ENCODE measurements at regions of chr2 and their contacts with region 1.

Region 1: GRCh38 chr2:69717861-69718273 is 24.1 kb upstream of the ANXA4 start:
- DNase-seq: peak in 1 of 2 experiments; percentile 37
- ATAC-seq: peak in 1 of 2 experiments; percentile 27; a peak in 3 of 6 replicates
- H3K4me3 ChIP-seq: no peak overlapping the region
- H3K27ac ChIP-seq: peak overlapping the region in 1 of 2 experiments; percentile 77; a peak in 3 of 6 replicates
- H3K4me1 ChIP-seq: peaks cover 35% of the 10 kb centered on the region
- CTCF ChIP-seq: no peak
- EP300 ChIP-seq: 0 out of 5 replicates have a peak, but pooled peaks of 1 of the 2 experiments have one; percentile 31
- POLR2A ChIP-seq: no peak
- RAD21 ChIP-seq: no peak

Region 2: DNA sequence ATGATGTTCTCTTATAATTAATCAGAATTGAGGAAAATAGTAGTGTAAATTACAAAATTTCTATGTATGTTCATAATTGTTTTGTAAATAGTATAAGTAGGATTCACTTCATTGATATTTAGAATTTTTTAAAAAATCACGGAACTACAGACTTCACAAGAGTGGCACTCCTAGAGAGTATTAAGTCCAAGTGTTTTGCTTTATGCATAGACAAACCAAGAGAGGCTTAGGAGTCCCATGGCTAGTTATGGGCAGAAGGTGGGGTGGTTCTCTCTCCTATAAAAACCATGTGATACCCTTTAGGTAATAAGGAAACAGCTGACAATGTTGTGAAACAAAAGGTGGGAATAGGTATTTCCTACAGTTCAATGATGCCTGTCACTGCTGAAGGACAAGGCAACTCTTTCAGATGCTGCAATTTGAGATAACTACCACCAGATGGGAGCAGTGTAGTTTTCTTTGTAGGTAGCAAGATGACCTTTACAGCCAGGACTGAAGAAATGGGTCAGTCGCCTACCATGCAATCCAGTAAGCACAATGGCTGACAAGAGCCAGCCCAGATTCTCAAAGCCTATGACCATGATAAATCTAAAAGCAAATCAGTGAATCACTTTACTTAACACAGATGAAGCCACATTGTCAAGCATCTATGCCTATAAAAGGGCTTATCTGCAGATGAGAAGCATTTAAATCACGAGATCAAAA is 158.3 kb before region 1 on chr2:
- CTCF ChIA-PET with region 1: interaction called, 66 read pairs
- POLR2A ChIA-PET with region 1: interaction called, 3 read pairs
- DNase-seq: peak; percentile 72 to 84
- ATAC-seq: peak; percentile 93 to 96
- H3K4me3 ChIP-seq: no peak overlapping the region
- H3K27ac ChIP-seq: 0 out of 6 replicates have a peak overlapping the region, but pooled peaks of 1 of the 2 experiments have one; percentile 4
- H3K4me1 ChIP-seq: peaks cover 12% of the 10 kb centered on the region
- CTCF ChIP-seq: peak; percentile 92
- EP300 ChIP-seq: no peak
- POLR2A ChIP-seq: no peak
- RAD21 ChIP-seq: peak; percentile 96 to 97

Region 3: DNA sequence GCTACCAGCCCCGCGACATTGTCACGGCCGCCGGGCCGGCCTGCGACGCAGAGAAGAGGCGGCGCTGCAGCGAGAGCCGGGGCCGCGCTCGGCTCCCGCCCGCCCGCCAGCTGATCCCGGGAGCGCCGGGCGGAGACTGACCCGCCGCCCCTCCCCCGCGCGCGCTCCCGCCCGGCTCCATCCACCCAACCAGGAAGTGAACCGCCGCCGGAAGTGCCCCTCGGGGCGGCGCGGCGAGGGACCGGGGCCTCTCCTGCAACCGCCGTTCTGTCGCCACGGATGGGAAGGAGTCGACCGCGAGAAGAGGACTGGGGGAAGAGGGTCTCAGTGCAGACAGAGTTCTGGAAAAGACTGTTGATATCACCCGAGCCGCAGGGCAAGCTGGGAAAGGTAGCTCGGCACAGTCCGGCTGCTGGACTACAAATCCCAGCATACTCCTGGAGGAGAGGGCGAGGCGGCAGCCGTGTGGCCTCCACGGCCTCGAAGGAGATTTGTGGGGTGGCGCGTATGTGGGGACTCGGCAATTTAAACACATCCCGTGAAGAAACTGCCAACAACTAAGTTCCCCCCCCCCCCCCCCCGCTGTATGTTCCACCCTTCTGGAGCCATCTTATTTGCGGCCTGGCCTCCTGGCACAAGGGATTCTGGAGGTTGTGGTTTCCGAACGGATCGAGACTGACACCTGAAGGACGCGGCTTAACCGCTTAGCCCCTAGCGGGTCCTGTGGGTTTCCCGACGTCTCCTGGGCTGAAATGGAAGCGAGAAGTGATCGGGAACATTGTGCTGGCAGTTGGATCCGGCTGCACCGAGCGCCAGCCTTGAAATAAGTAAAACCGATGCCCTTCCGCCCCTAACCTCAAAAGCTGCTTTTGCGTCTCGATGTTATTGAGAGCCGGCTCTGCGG is 74.0 kb before region 1 on chr2 and contains the start of gene AAK1:
- CTCF ChIA-PET with region 1: interaction called, 11 read pairs
- POLR2A ChIA-PET with region 1: no interaction called
- DNase-seq: peak; percentile 91 to 94
- ATAC-seq: peak; percentile 88 to 91
- H3K4me3 ChIP-seq: peak within 1 kb of the TSS; percentile 88
- H3K27ac ChIP-seq: peak within 1 kb of the TSS; percentile 94 to 98
- H3K4me1 ChIP-seq: peaks cover 38% of the 10 kb centered on the region
- CTCF ChIP-seq: peak; percentile 27; the same call in 1 of the 3 replicates
- EP300 ChIP-seq: no peak
- POLR2A ChIP-seq: peak; percentile 69
- RAD21 ChIP-seq: peak in 1 of 2 experiments; percentile 2; a peak in 2 of 5 replicates
- polyA plus RNA-seq, gene AAK1: 25.7 and 26.9 TPM in 2 replicates

Region 4: DNA sequence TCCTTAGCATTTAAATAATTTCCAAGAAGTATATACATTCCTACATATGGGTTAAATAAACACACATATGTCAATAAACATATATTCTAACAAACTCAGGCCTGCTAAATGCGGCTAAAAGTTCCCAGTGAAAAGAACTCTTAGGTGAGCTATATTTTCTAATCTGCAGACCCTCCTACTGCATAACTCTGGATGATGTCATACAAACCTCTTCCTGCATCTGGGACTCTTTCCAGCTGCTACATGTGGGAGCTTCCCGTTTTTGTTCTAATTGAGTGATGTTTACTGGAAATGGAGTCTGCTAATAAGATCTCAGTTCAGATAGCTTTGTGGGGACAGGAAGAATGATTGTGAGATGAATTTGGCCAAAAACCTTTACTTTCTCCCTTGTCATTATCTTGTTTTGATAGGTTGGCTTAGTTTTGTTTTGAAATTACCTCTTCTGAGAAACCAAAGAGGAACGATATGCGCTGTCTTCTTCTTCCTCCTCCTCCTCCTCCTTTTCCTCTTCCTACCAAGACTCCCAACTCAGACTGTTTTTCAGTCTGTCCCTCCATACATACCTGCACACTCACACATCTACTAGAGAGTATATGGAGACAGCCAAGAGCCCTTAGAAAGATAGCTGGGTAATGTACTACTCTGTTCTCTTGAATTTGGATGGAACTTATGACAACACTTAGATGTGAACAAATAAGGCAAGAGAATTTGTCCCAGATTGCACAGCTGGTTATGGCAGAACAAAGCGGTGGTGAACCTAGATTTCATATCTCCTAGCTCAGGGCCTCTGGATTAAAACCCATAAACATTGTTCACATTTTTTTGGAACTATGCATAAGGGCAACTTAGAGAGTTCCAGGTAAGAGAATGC is 34.5 kb before region 1 on chr2:
- CTCF ChIA-PET with region 1: interaction called, 11 read pairs
- POLR2A ChIA-PET with region 1: no interaction called
- DNase-seq: peak in 1 of 2 experiments; percentile 30
- ATAC-seq: peak in 1 of 2 experiments; percentile 60; a peak in 3 of 6 replicates
- H3K4me3 ChIP-seq: no peak overlapping the region
- H3K27ac ChIP-seq: peak overlapping the region; percentile 27 to 70; a peak in 5 of 6 replicates
- H3K4me1 ChIP-seq: peaks cover 34% of the 10 kb centered on the region
- CTCF ChIP-seq: no peak
- EP300 ChIP-seq: no peak
- POLR2A ChIP-seq: no peak
- RAD21 ChIP-seq: no peak

Region 5: DNA sequence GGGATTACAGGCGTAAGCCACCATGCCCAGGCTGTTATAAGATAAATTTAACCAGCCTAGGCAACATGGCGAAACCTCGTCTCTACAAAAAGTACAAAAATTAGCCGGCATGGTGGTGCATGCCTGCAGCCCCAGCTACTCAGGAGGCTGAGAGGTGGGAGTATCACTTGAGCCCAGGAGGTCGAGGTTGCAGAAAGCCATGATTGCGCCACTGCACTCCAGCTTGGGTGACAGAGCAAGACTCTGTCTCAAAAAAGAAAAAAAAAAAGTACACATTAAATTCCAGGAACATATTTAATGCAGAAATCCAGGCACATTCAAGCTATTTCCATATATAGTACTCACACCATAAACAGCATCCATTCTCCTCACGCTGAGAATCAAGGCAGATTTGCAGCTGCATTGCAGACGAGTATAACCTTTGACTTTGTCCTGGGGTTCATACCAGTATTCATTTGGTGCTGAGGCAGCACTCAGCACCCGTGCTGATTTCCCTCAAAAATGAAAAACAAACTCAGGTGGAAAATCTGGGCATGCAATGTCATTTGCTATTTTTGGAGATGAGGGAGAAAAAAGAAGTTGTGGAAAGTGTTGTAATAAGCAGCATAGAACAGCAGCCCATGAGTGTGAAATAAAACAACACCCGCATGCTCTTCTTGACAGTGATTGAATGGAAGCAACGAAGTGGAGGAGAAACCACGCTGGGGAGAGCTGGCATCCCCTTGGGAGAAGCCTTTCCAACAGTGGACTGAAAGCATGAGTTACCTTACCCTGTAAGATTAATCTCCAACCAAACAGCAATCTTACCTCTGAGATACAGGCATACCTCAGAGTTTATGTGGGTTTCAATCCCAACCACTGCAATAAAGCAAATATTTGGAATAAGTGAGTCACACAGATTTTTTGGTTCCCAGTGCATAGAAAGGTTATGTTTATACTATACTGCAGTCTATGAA is 22.7 kb before region 1 on chr2:
- CTCF ChIA-PET with region 1: interaction called, 25 read pairs
- POLR2A ChIA-PET with region 1: no interaction called
- DNase-seq: peak in 1 of 2 experiments; percentile 78
- ATAC-seq: peak; percentile 79 to 90
- H3K4me3 ChIP-seq: peak overlapping the region; percentile 20
- H3K27ac ChIP-seq: peak overlapping the region; percentile 53 to 76; a peak in 5 of 6 replicates
- H3K4me1 ChIP-seq: peaks cover 46% of the 10 kb centered on the region
- CTCF ChIP-seq: no peak
- EP300 ChIP-seq: no peak; a peak in 1 of 5 replicates
- POLR2A ChIP-seq: no peak
- RAD21 ChIP-seq: no peak; a peak in 2 of 5 replicates

Region 6: DNA sequence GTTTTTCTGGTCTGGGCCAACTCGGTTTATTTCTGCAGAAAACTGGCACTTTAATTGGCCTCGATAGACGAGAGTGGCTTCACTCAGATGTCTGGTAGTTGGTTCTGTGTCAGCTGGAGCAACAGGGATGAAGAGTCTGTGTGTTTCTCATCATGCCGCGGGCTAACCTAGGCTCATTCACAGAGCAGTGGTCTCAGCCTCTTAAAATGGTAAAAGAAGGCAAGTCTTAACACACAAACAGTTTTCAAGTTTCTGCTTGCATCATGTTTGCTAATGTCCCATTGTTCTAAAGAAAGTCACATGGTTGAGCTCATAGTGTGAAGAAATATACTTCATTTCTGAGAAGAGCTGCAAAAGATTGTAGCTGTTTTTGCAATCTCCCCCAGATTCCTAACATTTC is 13.4 kb before region 1 on chr2:
- CTCF ChIA-PET with region 1: interaction called, 14 read pairs
- POLR2A ChIA-PET with region 1: no interaction called
- DNase-seq: no peak
- ATAC-seq: no peak
- H3K4me3 ChIP-seq: no peak overlapping the region
- H3K27ac ChIP-seq: no peak overlapping the region
- H3K4me1 ChIP-seq: no peaks in the 10 kb centered on the region
- CTCF ChIP-seq: no peak
- EP300 ChIP-seq: no peak
- POLR2A ChIP-seq: no peak
- RAD21 ChIP-seq: no peak